Activated CD4-positive, alpha-beta T cell treated with anti-CD3 and anti-CD28 coated beads for 36 hours (primary cell): ENCODE measurements at regions of chr18 and their contacts with region 1.

Region 1: DNA sequence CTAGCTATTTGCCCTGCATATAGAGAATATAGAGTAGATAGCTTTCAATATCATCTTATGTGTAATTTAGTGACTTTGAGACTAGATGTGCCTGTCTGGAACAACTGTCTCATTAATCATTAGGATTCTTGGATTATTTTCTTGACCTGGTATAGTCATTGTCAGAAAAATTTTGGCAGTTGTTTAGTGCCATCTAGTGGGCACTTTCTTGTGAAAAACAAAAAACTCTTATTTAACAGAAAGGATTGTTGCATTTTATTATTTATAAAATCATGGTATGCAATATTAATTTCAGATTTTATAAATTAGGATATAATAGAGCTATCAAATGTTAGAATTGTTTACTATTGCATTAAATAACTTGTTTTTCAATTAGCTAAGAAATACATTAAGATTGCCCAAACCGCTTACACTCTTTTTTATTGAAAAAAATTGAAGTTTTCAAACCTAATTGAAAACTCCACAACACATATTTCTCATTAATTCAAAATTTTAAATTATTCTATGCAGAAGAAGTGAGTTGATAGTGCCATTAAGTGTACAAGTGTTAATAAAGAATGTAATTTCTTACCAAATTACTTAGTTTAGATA is 80.3 kb downstream of the DYNAP start:
- DNase-seq: no peak
- ATAC-seq: no peak
- H3K4me3 Mint-ChIP-seq: no peak overlapping the region
- H3K27ac Mint-ChIP-seq: no peak overlapping the region
- H3K4me1 Mint-ChIP-seq: no peaks in the 10 kb centered on the region
- H3K27me3 Mint-ChIP-seq: peaks cover 3% of the 10 kb centered on the region

Region 2: GRCh38 chr18:53567929-53568574 is 1103.3 kb before region 1 on chr18:
- CTCF ChIA-PET with region 1: no interaction called
- POLR2A ChIA-PET with region 1: no interaction called
- intact Hi-C with region 1: loop called (anchors 2 to 5 kb)
- DNase-seq: no peak
- ATAC-seq: no peak
- H3K4me3 Mint-ChIP-seq: no peak overlapping the region
- H3K27ac Mint-ChIP-seq: no peak overlapping the region
- H3K4me1 Mint-ChIP-seq: no peaks in the 10 kb centered on the region
- H3K27me3 Mint-ChIP-seq: peaks cover 2% of the 10 kb centered on the region

Region 3: DNA sequence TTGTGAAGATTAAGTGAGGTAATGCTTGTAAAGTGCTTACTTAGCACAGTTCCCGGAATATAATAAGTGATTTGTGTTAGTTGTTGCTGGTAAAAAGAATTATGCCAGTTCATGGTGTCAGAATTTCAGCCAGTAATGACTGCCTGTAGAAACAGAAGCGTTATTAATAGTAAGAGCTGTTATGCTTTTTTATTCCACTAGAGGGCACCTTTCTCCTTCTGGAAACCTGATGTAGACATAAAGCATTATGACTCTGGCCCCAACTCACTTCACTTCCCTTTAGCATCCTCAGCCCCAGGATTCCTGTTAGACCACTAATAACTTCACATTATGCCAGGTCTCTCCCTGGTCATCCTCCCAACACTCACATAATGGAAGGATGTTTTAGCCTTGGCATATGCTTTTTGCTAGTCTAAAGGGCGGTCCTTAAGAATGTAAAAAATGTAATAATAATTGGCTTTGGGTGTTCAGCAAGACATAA is 278.8 kb before region 1 on chr18:
- CTCF ChIA-PET with region 1: interaction called, 7 read pairs
- POLR2A ChIA-PET with region 1: no interaction called
- intact Hi-C with region 1: loop called (anchors 1 to 5 kb)
- DNase-seq: no peak
- ATAC-seq: peak; percentile 59
- H3K4me3 Mint-ChIP-seq: no peak overlapping the region
- H3K27ac Mint-ChIP-seq: no peak overlapping the region
- H3K4me1 Mint-ChIP-seq: peaks cover 6% of the 10 kb centered on the region
- H3K27me3 Mint-ChIP-seq: peaks cover 6% of the 10 kb centered on the region

Region 4: DNA sequence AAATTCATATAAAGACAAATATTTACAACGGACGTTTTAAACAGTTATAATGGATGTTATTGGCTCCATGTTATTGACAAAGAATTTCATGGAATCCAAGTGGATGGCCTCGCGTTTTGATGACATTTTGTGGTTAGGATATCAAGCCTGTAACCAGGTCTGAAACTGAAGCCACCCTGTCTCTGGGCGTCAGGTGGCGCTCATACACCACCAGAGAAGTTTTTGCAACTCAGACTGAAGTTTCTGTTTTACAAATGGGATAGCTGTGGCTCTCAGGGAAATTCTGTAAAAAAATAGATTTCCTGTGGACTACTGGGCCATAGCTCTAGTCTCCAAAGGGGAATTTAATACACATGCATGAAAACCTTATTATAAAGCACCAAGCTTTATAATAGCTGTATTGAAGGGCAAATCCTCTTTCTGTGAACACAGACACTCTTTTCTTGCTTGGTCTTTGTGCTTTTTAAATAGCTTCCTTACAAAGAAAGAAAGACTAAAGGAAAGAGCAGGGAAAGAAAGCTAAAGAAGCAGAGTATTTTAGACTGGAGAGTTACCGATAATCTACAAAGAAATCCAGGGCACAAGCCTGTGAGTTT is 227.0 kb before region 1 on chr18:
- CTCF ChIA-PET with region 1: interaction called, 27 read pairs
- POLR2A ChIA-PET with region 1: no interaction called
- intact Hi-C with region 1: loop called (anchors 1 kb)
- DNase-seq: peak; percentile 71
- ATAC-seq: peak; percentile 68
- H3K4me3 Mint-ChIP-seq: no peak overlapping the region
- H3K27ac Mint-ChIP-seq: no peak overlapping the region
- H3K4me1 Mint-ChIP-seq: no peaks in the 10 kb centered on the region
- H3K27me3 Mint-ChIP-seq: peaks cover 10% of the 10 kb centered on the region

Region 5: GRCh38 chr18:54503131-54503894 is 168.1 kb before region 1 on chr18:
- CTCF ChIA-PET with region 1: no interaction called
- POLR2A ChIA-PET with region 1: no interaction called
- intact Hi-C with region 1: no loop called
- DNase-seq: no peak
- ATAC-seq: no peak
- H3K4me3 Mint-ChIP-seq: no peak overlapping the region
- H3K27ac Mint-ChIP-seq: no peak overlapping the region
- H3K4me1 Mint-ChIP-seq: no peaks in the 10 kb centered on the region
- H3K27me3 Mint-ChIP-seq: peaks cover 7% of the 10 kb centered on the region

Region 6: GRCh38 chr18:54684784-54685183 is 13.4 kb after region 1 on chr18:
- CTCF ChIA-PET with region 1: interaction called, 11 read pairs
- POLR2A ChIA-PET with region 1: no interaction called
- intact Hi-C with region 1: no loop called
- DNase-seq: no peak
- ATAC-seq: no peak
- H3K4me3 Mint-ChIP-seq: no peak overlapping the region
- H3K27ac Mint-ChIP-seq: no peak overlapping the region
- H3K4me1 Mint-ChIP-seq: no peaks in the 10 kb centered on the region
- H3K27me3 Mint-ChIP-seq: no peaks in the 10 kb centered on the region